ENCODE measurements at regions of chr15 and their contacts with region 1.

Region 1: GRCh38 chr15:78979456-78980320 is 34.8 kb upstream of the CTSH start:
- DNase-seq: peak; percentile 85
- H3K4me3 Mint-ChIP-seq: no peak overlapping the region
- H3K27ac Mint-ChIP-seq: peak overlapping the region; percentile 22
- H3K4me1 Mint-ChIP-seq: peaks cover 23% of the 10 kb centered on the region
- H3K27me3 Mint-ChIP-seq: no peaks in the 10 kb centered on the region
- CTCF ChIP-seq: peak; percentile 65

Region 2: GRCh38 chr15:78893538-78893937 is 86.2 kb before region 1 on chr15:
- CTCF ChIA-PET with region 1: no interaction called
- intact Hi-C with region 1: no loop called
- DNase-seq: no peak
- H3K4me3 Mint-ChIP-seq: no peak overlapping the region
- H3K27ac Mint-ChIP-seq: no peak overlapping the region
- H3K4me1 Mint-ChIP-seq: no peaks in the 10 kb centered on the region
- H3K27me3 Mint-ChIP-seq: no peaks in the 10 kb centered on the region
- CTCF ChIP-seq: no peak

Region 3: DNA sequence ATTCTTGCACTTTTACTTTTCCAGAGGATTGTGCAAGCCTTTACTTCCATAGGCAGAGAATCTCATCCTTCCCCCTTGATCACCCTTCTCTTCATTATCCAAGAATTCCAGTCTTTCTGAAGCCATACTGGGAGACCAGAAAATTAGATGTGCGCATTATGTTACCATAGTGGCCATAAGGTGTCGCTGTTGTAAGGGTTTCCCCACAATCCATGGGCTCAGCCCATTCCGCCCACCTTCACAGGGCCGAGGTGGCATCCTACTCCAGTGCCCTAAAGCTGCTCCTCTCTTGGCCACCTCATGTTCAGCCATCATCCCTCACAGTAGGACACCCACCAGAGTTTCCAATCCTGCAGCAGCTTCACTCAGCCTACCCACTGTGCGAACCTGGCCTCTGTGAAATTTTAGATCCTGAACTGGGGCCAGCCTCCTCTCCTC is 69.9 kb before region 1 on chr15:
- CTCF ChIA-PET with region 1: interaction called, 18 read pairs
- intact Hi-C with region 1: loop called (anchors 1 kb)
- DNase-seq: peak; percentile 67
- H3K4me3 Mint-ChIP-seq: no peak overlapping the region
- H3K27ac Mint-ChIP-seq: peak overlapping the region; percentile 9
- H3K4me1 Mint-ChIP-seq: peaks cover 7% of the 10 kb centered on the region
- H3K27me3 Mint-ChIP-seq: no peaks in the 10 kb centered on the region
- CTCF ChIP-seq: peak; percentile 73

Region 4: GRCh38 chr15:78944669-78945407 is 34.9 kb before region 1 on chr15 and contains the start of gene CTSH:
- CTCF ChIA-PET with region 1: interaction called, 14 read pairs
- intact Hi-C with region 1: loop called (anchors 1 kb)
- DNase-seq: peak; percentile 97
- H3K4me3 Mint-ChIP-seq: peak within 1 kb of the TSS; percentile 100
- H3K27ac Mint-ChIP-seq: peak within 1 kb of the TSS; percentile 82
- H3K4me1 Mint-ChIP-seq: peaks cover 19% of the 10 kb centered on the region
- H3K27me3 Mint-ChIP-seq: no peaks in the 10 kb centered on the region
- CTCF ChIP-seq: no peak
- total RNA-seq, gene CTSH: 327 and 433 TPM in 2 replicates

Region 5: GRCh38 chr15:78950904-78951840 is 28.5 kb before region 1 on chr15:
- CTCF ChIA-PET with region 1: interaction called, 14 read pairs
- intact Hi-C with region 1: no loop called
- DNase-seq: no peak
- H3K4me3 Mint-ChIP-seq: peak overlapping the region; percentile 31
- H3K27ac Mint-ChIP-seq: peak overlapping the region; percentile 87
- H3K4me1 Mint-ChIP-seq: peaks cover 56% of the 10 kb centered on the region
- H3K27me3 Mint-ChIP-seq: no peaks in the 10 kb centered on the region
- CTCF ChIP-seq: no peak

Region 6: GRCh38 chr15:79101866-79102578 is 122.3 kb after region 1 on chr15:
- CTCF ChIA-PET with region 1: no interaction called
- intact Hi-C with region 1: no loop called
- DNase-seq: no peak
- H3K4me3 Mint-ChIP-seq: no peak overlapping the region
- H3K27ac Mint-ChIP-seq: no peak overlapping the region
- H3K4me1 Mint-ChIP-seq: no peaks in the 10 kb centered on the region
- H3K27me3 Mint-ChIP-seq: peaks cover 100% of the 10 kb centered on the region
- CTCF ChIP-seq: no peak